Activated CD8-positive, alpha-beta T cell treated with anti-CD3 and anti-CD28 coated beads for 36 hours (primary cell): ENCODE measurements at regions of chr22 and their contacts with region 1.

Region 1: DNA sequence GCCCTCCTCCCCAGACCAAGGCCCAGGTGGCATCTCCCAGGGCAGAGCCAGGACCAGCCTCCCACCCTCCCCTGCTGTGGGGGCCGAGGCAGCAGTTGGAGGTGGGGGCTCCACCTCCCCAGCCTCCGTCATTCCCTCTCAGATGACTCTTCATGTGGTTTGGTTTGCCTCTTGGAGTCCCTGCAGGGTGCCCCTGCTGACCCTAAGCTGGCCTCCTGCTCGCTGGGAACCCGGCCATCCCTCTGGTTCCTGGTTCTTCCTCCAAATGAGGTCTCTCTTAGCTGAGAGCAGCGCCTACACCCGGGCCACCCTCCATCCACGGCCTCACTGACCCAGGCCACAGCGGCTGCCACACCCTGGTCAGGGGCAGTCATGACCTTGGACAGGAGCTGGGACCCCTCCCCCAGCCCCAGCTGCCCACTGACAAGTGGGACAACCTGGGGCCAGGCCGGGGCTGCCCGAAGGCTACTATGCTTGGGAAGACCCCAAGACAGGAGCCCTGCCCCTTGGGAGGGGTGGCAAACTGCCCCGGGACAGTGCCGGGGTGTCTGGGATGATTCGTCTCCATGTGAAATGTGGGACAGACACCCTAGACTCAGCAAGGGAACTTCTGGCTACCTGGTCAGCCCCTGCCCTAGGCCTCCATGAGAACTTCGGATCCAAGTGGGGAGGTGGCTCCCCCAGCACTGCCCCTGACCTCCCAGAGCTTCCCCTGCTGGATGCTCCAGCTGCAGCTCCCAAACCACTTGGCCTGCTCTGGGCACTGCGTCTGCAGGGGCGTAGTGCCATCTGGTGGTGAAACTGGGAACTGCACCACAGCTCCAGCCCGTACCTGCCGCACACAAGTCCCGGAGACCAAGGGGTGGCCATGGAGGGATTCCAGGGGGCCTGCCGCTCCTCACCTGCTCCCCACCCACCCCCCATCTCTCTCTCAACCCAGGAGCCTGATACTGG is 194.5 kb downstream of the IGLL1 start:
- DNase-seq: peak; percentile 87
- ATAC-seq: peak; percentile 93
- H3K4me3 Mint-ChIP-seq: no peak overlapping the region
- H3K27ac Mint-ChIP-seq: no peak overlapping the region
- H3K4me1 Mint-ChIP-seq: no peaks in the 10 kb centered on the region
- H3K27me3 Mint-ChIP-seq: peaks cover 2% of the 10 kb centered on the region
- CTCF ChIP-seq: peak; percentile 95

Region 2: DNA sequence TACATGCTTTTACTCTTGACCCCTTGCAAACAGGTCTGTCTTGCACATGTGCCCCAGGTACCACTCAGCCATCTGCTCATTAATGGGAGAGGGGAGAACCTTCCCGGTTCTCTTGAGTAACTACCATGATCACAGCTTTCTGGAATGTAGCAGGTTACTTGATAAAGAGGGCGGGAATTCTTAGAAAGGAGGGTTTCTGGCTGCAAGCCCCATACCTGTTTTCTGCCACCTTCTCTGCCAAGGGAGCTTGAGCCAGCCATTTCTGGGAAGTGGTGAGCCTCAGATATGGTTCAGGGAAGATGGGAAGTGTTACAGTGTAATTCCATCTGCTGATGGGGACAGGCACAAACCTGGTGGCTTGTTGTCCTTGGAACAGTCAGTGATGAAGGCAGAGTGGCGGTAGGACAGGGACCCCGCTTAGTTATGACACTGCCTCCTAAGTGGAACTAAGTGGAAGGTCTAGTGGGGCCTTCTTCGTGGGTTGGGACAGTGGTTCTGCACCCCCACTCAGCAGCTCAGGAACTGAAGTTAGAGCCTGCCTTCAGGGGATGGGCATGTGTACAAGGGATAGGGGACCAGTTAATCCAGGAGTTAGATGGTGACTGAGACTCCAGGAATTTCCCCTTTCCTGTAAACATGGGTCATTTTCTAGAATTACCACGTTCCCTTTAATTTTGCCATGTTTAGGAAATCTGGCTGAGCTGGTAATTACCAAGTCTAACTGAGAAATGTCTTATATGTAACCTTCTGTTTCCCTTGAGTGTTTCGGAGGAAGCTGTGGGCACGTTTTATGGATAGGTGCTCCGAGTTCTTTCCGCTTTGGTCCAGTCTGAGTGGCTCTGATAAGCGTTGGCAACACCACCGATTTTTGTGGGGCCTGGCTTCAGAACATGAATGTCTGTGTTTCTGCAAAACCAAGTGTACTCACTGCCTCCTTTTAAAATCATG is 170.0 kb before region 1 on chr22:
- CTCF ChIA-PET with region 1: no interaction called
- POLR2A ChIA-PET with region 1: no interaction called
- intact Hi-C with region 1: no loop called
- DNase-seq: peak; percentile 33
- ATAC-seq: no peak
- H3K4me3 Mint-ChIP-seq: peak overlapping the region; percentile 66
- H3K27ac Mint-ChIP-seq: peak overlapping the region; percentile 95
- H3K4me1 Mint-ChIP-seq: peaks cover 73% of the 10 kb centered on the region
- H3K27me3 Mint-ChIP-seq: no peaks in the 10 kb centered on the region
- CTCF ChIP-seq: no peak

Region 3: DNA sequence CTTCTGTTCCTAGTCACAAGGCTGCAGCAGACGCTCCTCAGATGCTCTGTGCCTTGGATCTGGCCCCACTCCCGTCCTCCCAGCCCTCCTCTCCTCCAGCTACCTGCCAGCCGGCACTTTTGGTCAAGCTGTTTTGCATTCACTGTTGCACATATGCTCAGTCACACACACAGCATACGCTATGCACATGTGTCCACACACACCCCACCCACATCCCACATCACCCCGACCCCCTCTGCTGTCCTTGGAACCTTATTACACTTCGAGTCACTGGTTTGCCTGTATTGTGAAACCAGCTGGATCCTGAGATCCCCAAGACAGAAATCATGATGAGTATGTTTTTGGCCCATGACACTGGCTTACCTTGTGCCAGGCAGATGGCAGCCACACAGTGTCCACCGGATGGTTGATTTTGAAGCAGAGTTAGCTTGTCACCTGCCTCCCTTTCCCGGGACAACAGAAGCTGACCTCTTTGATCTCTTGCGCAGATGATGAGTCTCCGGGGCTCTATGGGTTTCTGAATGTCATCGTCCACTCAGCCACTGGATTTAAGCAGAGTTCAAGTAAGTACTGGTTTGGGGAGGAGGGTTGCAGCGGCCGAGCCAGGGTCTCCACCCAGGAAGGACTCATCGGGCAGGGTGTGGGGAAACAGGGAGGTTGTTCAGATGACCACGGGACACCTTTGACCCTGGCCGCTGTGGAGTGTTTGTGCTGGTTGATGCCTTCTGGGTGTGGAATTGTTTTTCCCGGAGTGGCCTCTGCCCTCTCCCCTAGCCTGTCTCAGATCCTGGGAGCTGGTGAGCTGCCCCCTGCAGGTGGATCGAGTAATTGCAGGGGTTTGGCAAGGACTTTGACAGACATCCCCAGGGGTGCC is 95.5 kb before region 1 on chr22:
- CTCF ChIA-PET with region 1: interaction called, 11 read pairs
- POLR2A ChIA-PET with region 1: no interaction called
- intact Hi-C with region 1: no loop called
- DNase-seq: peak; percentile 69
- ATAC-seq: peak; percentile 85
- H3K4me3 Mint-ChIP-seq: no peak overlapping the region
- H3K27ac Mint-ChIP-seq: no peak overlapping the region
- H3K4me1 Mint-ChIP-seq: no peaks in the 10 kb centered on the region
- H3K27me3 Mint-ChIP-seq: no peaks in the 10 kb centered on the region
- CTCF ChIP-seq: peak; percentile 89

Region 4: GRCh38 chr22:23315341-23315917 is 70.1 kb before region 1 on chr22:
- CTCF ChIA-PET with region 1: interaction called, 17 read pairs
- POLR2A ChIA-PET with region 1: no interaction called
- intact Hi-C with region 1: no loop called
- DNase-seq: peak; percentile 77
- ATAC-seq: no peak
- H3K4me3 Mint-ChIP-seq: no peak overlapping the region
- H3K27ac Mint-ChIP-seq: peak overlapping the region; percentile 20
- H3K4me1 Mint-ChIP-seq: peaks cover 9% of the 10 kb centered on the region
- H3K27me3 Mint-ChIP-seq: no peaks in the 10 kb centered on the region
- CTCF ChIP-seq: peak; percentile 86

Region 5: GRCh38 chr22:23322547-23322946 is 63.0 kb before region 1 on chr22:
- CTCF ChIA-PET with region 1: interaction called, 10 read pairs
- POLR2A ChIA-PET with region 1: no interaction called
- intact Hi-C with region 1: no loop called
- DNase-seq: no peak
- ATAC-seq: no peak
- H3K4me3 Mint-ChIP-seq: no peak overlapping the region
- H3K27ac Mint-ChIP-seq: no peak overlapping the region
- H3K4me1 Mint-ChIP-seq: peaks cover 7% of the 10 kb centered on the region
- H3K27me3 Mint-ChIP-seq: no peaks in the 10 kb centered on the region
- CTCF ChIP-seq: no peak

Region 6: DNA sequence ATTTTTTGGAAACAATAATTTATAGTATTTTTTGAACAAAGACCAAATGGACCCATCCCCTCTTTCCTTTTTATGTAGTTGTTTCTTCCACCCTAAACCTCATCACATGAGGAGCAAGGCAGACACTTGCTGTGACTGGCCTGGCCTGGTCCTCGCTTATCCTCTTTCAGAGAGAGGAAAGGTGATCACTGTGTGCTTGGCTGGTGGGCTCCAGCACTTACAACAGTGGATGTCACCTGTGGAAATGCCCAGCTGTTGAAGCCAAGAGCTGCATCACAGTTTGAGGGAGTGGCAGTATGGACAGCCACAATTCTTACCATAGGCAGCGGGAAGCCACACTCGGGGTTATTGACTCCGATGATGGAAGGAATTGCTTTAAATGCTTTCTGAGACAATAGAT is 19.6 kb before region 1 on chr22:
- CTCF ChIA-PET with region 1: interaction called, 13 read pairs
- POLR2A ChIA-PET with region 1: no interaction called
- intact Hi-C with region 1: no loop called
- DNase-seq: no peak
- ATAC-seq: no peak
- H3K4me3 Mint-ChIP-seq: no peak overlapping the region
- H3K27ac Mint-ChIP-seq: no peak overlapping the region
- H3K4me1 Mint-ChIP-seq: no peaks in the 10 kb centered on the region
- H3K27me3 Mint-ChIP-seq: peaks cover 5% of the 10 kb centered on the region
- CTCF ChIP-seq: no peak